CD8-positive, alpha-beta T cell (primary cell): ENCODE measurements at regions of chr17 and their contacts with region 1.

Region 1: GRCh38 chr17:9115446-9116191 is 94.3 kb downstream of the NTN1 start:
- DNase-seq: peak in 8 of 9 experiments; percentile 26 to 61 (median 45)
- ATAC-seq: peak; percentile 75
- H3K4me3 ChIP-seq: peak overlapping the region; percentile 20
- H3K4me3 Mint-ChIP-seq: peak overlapping the region; percentile 71
- H3K27ac ChIP-seq: no peak overlapping the region
- H3K27ac Mint-ChIP-seq: no peak overlapping the region
- H3K4me1 ChIP-seq: no peaks in the 10 kb centered on the region
- H3K4me1 Mint-ChIP-seq: peaks cover 5% of the 10 kb centered on the region
- H3K27me3 ChIP-seq: no peaks in the 10 kb centered on the region
- H3K27me3 Mint-ChIP-seq: peaks cover 4% of the 10 kb centered on the region
- CTCF ChIP-seq: no peak

Region 2: DNA sequence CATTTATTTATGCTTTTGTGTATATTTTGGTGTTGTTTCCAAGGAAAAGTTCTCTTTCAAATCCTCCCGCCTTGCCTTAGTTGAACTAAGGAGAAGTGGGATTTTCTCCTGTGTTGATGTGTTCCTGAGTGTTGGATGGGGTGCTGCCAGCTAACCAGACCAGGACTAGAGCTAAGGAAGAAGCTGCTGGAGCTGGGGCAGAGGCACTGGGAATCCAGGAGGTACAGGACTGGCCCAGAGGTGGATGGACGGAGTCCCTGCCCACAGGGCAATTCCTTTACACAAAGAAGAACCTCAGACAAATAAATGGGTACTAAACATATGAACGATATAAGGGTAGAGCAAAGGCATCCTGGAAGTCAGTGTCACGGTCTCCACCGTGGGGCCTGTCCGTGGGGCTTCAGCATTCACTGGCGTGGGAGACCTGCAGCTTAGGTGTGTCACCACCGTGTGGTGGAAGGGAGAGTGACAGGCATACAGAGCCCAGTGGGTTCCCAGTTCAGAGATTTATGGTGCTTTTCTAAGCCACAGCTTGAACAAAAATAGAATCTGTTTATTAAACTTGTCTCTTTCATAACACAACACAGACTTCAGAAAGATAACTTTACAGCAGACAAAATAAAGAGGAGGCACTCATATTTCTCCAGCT is 176.4 kb after region 1 on chr17:
- CTCF ChIA-PET with region 1: no interaction called
- POLR2A ChIA-PET with region 1: no interaction called
- intact Hi-C with region 1: loop called in 1 of 2 experiments (anchors 10 kb)
- DNase-seq: peak in 6 of 9 experiments; percentile 1 to 43 (median 27)
- ATAC-seq: peak; percentile 48
- H3K4me3 ChIP-seq: no peak overlapping the region
- H3K4me3 Mint-ChIP-seq: no peak overlapping the region
- H3K27ac ChIP-seq: no peak overlapping the region
- H3K27ac Mint-ChIP-seq: no peak overlapping the region
- H3K4me1 ChIP-seq: peaks cover 7% of the 10 kb centered on the region
- H3K4me1 Mint-ChIP-seq: peaks cover 26% of the 10 kb centered on the region
- H3K27me3 ChIP-seq: no peaks in the 10 kb centered on the region
- H3K27me3 Mint-ChIP-seq: no peaks in the 10 kb centered on the region
- CTCF ChIP-seq: peak; percentile 52

Region 3: GRCh38 chr17:9522074-9522473 is 406.5 kb after region 1 on chr17:
- CTCF ChIA-PET with region 1: no interaction called
- POLR2A ChIA-PET with region 1: no interaction called
- intact Hi-C with region 1: loop called (anchors 5 to 10 kb)
- DNase-seq: peak in 2 of 9 experiments; percentile 37 to 42
- ATAC-seq: no peak
- H3K4me3 ChIP-seq: no peak overlapping the region
- H3K4me3 Mint-ChIP-seq: no peak overlapping the region
- H3K27ac ChIP-seq: no peak overlapping the region
- H3K27ac Mint-ChIP-seq: no peak overlapping the region
- H3K4me1 ChIP-seq: peaks cover 9% of the 10 kb centered on the region
- H3K4me1 Mint-ChIP-seq: peaks cover 19% of the 10 kb centered on the region
- H3K27me3 ChIP-seq: no peaks in the 10 kb centered on the region
- H3K27me3 Mint-ChIP-seq: no peaks in the 10 kb centered on the region
- CTCF ChIP-seq: no peak

Region 4: DNA sequence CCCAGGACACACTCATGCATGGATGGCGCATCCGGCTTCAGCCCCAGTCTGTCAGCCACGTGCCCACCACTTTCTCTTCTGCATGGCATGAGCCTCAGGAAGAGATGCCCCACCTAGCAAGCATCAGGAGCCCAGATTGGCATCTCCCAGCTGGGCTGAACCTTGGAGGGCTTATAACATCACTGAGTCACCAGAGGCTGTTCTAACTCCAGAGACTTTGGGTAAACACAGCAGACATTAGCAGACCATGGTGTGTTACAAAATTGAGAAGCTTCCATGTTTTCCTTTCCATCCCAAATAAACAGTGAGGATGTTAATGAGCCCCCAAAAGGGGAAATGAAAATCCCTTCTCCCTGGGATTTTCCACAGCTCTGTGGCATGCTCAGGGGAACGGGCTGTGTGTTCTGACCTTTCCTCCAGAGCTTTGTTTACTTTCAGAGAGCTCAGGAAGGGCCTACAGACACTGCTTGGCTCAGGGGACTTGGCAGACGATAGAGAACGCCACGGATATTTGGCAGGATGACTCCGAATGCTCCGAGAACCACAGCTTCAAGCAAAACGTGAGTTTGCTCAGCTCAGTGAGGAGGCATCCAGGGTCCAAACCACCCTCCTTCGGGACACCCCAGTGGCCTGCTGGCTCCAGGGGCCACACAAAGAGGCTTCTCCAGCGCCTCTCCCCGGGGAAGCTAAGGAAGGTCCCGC is 726.6 kb after region 1 on chr17:
- CTCF ChIA-PET with region 1: no interaction called
- POLR2A ChIA-PET with region 1: no interaction called
- intact Hi-C with region 1: no loop called
- DNase-seq: peak in 1 of 9 experiments; percentile 21
- ATAC-seq: no peak
- H3K4me3 ChIP-seq: no peak overlapping the region
- H3K4me3 Mint-ChIP-seq: no peak overlapping the region
- H3K27ac ChIP-seq: no peak overlapping the region
- H3K27ac Mint-ChIP-seq: no peak overlapping the region
- H3K4me1 ChIP-seq: no peaks in the 10 kb centered on the region
- H3K4me1 Mint-ChIP-seq: no peaks in the 10 kb centered on the region
- H3K27me3 ChIP-seq: no peaks in the 10 kb centered on the region
- H3K27me3 Mint-ChIP-seq: peaks cover 30% of the 10 kb centered on the region
- CTCF ChIP-seq: no peak